Transverse colon (tissue), 4 donors: ENCODE measurements at regions of chr9 and their contacts with region 1.

Region 1: GRCh38 chr9:124771021-124771866 is at the start of gene NR6A1:
- DNase-seq: peak; percentile 98
- H3K4me3 ChIP-seq: peak within 1 kb of the TSS; percentile 83 to 100 (median 91)
- H3K27ac ChIP-seq: peak within 1 kb of the TSS; percentile 88 to 94 (median 90)
- H3K4me1 ChIP-seq: peaks cover 0 to 52% (median 30%) of the 10 kb centered on the region in 4 donors
- H3K27me3 ChIP-seq: peaks cover 54% of the 10 kb centered on the region
- CTCF ChIP-seq: peak in 3 of 5 experiments; percentile 28 to 59 (median 37)
- EP300 ChIP-seq: peak; percentile 22
- POLR2A ChIP-seq: peak; percentile 33
- total RNA-seq, gene NR6A1: 9.7 to 14.6 (median 12.5) TPM

Region 2: GRCh38 chr9:124852829-124853531 is 81.7 kb after region 1 on chr9 and contains the start of gene WDR38:
- in situ Hi-C with region 1: loop called (anchors 5 kb)
- intact Hi-C with region 1: loop called (anchors 1 kb)
- DNase-seq: peak; percentile 76
- H3K4me3 ChIP-seq: peak within 1 kb of the TSS; percentile 9 to 56 (median 36)
- H3K27ac ChIP-seq: peak within 1 kb of the TSS; percentile 11 to 63 (median 54)
- H3K4me1 ChIP-seq: peaks cover 6 to 24% (median 13%) of the 10 kb centered on the region in 4 donors
- H3K27me3 ChIP-seq: no peaks in the 10 kb centered on the region
- CTCF ChIP-seq: peak; percentile 99 to 100 (median 99)
- EP300 ChIP-seq: no peak
- POLR2A ChIP-seq: no peak
- total RNA-seq, gene WDR38: not detected

Region 3: GRCh38 chr9:125374443-125375309 is 603.4 kb after region 1 on chr9:
- in situ Hi-C with region 1: loop called in 3 of 4 experiments (anchors 10 kb)
- intact Hi-C with region 1: no loop called
- DNase-seq: peak; percentile 59
- H3K4me3 ChIP-seq: peak overlapping the region in 2 of 4 donors; percentile 20 to 30
- H3K27ac ChIP-seq: no peak overlapping the region
- H3K4me1 ChIP-seq: peaks cover 4 to 10% (median 7%) of the 10 kb centered on the region in 4 donors
- H3K27me3 ChIP-seq: no peaks in the 10 kb centered on the region
- CTCF ChIP-seq: peak; percentile 59 to 84 (median 73)
- EP300 ChIP-seq: no peak
- POLR2A ChIP-seq: no peak

Region 4: GRCh38 chr9:125815568-125815967 is 1044.3 kb after region 1 on chr9:
- in situ Hi-C with region 1: no loop called
- intact Hi-C with region 1: loop called (anchors 10 kb)
- DNase-seq: no peak
- H3K4me3 ChIP-seq: no peak overlapping the region
- H3K27ac ChIP-seq: no peak overlapping the region
- H3K4me1 ChIP-seq: peaks cover 0 to 1% (median 0%) of the 10 kb centered on the region in 4 donors
- H3K27me3 ChIP-seq: no peaks in the 10 kb centered on the region
- CTCF ChIP-seq: no peak
- EP300 ChIP-seq: no peak
- POLR2A ChIP-seq: no peak